ENCODE measurements at regions of chr4 and their contacts with region 1.

Region 1: GRCh38 chr4:56977321-56978012 is at the start of gene NOA1:
- DNase-seq: peak; percentile 99
- ATAC-seq: peak; percentile 68
- H3K4me3 ChIP-seq: peak within 1 kb of the TSS; percentile 98
- H3K27ac ChIP-seq: peak within 1 kb of the TSS; percentile 79
- H3K4me1 ChIP-seq: peaks cover 31% of the 10 kb centered on the region
- H3K27me3 ChIP-seq: no peaks in the 10 kb centered on the region
- CTCF ChIP-seq: no peak
- total RNA-seq, gene NOA1: 33.1 and 37.7 TPM in 2 replicates

Region 2: GRCh38 chr4:56445699-56446098 is 531.8 kb before region 1 on chr4:
- CTCF ChIA-PET with region 1: no interaction called
- POLR2A ChIA-PET with region 1: no interaction called
- intact Hi-C with region 1: no loop called
- DNase-seq: no peak
- ATAC-seq: no peak
- H3K4me3 ChIP-seq: no peak overlapping the region
- H3K27ac ChIP-seq: no peak overlapping the region
- H3K4me1 ChIP-seq: peaks cover 14% of the 10 kb centered on the region; the same call in 1 of the 2 replicates
- H3K27me3 ChIP-seq: no peaks in the 10 kb centered on the region
- CTCF ChIP-seq: no peak

Region 3: DNA sequence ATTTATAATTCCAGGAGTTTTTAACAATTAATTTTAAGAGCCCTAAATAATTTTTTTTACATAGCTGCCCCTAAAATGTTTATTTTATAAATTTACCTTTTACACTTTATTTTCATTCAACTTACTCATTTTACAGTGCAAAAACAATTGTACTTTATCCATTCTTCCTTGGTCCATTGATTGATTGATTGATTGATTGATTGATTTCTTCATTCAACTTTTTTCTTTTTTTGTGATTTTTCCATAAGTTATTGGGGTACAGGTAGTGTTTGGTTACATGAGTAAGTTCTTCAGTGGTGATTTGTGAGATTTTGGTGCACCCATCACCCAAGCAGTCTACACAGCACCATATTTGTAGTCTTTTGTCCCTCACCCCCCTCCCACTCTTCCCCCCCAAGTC is 390.4 kb before region 1 on chr4:
- CTCF ChIA-PET with region 1: no interaction called
- POLR2A ChIA-PET with region 1: interaction called, 21 read pairs
- intact Hi-C with region 1: no loop called
- DNase-seq: no peak
- ATAC-seq: no peak
- H3K4me3 ChIP-seq: no peak overlapping the region
- H3K27ac ChIP-seq: no peak overlapping the region
- H3K4me1 ChIP-seq: no peaks in the 10 kb centered on the region
- H3K27me3 ChIP-seq: no peaks in the 10 kb centered on the region
- CTCF ChIP-seq: no peak

Region 4: DNA sequence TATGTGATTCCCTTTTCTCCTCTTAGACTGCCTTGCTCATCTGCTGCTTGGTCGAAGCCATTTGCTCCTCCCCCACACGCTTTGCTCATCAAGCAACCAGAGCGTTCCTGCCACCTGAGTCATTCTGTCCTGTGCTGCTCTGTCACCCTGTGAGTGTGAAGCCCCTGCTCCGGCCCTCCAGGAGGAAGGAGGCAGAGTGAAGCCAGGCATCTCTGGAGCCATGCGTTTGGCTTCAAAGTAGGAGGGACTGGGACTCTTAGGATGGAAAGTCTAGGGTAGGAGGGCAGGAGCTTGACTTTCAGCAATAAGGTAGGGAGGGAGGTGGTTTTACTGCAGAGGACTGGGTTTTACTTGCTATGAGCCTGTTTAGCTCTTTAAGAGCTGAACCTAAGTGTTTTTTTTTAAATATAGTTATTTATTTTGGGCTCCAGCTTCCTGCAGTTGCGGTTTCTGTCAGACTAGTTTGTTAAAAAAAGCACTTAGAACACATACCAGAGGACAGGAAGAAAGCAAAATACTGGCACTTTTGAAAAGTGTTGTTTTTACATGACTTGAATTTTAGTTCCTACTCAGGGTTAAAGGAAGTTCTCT is 219.6 kb before region 1 on chr4:
- CTCF ChIA-PET with region 1: no interaction called
- POLR2A ChIA-PET with region 1: no interaction called
- intact Hi-C with region 1: no loop called
- DNase-seq: peak; percentile 98
- ATAC-seq: peak; percentile 89
- H3K4me3 ChIP-seq: peak overlapping the region; percentile 43
- H3K27ac ChIP-seq: peak overlapping the region; percentile 74
- H3K4me1 ChIP-seq: peaks cover 39% of the 10 kb centered on the region
- H3K27me3 ChIP-seq: no peaks in the 10 kb centered on the region
- CTCF ChIP-seq: no peak

Region 5: GRCh38 chr4:56768763-56769162 is 208.7 kb before region 1 on chr4:
- CTCF ChIA-PET with region 1: no interaction called
- POLR2A ChIA-PET with region 1: no interaction called
- intact Hi-C with region 1: no loop called
- DNase-seq: no peak
- ATAC-seq: no peak
- H3K4me3 ChIP-seq: no peak overlapping the region
- H3K27ac ChIP-seq: no peak overlapping the region
- H3K4me1 ChIP-seq: no peaks in the 10 kb centered on the region
- H3K27me3 ChIP-seq: no peaks in the 10 kb centered on the region
- CTCF ChIP-seq: no peak

Region 6: DNA sequence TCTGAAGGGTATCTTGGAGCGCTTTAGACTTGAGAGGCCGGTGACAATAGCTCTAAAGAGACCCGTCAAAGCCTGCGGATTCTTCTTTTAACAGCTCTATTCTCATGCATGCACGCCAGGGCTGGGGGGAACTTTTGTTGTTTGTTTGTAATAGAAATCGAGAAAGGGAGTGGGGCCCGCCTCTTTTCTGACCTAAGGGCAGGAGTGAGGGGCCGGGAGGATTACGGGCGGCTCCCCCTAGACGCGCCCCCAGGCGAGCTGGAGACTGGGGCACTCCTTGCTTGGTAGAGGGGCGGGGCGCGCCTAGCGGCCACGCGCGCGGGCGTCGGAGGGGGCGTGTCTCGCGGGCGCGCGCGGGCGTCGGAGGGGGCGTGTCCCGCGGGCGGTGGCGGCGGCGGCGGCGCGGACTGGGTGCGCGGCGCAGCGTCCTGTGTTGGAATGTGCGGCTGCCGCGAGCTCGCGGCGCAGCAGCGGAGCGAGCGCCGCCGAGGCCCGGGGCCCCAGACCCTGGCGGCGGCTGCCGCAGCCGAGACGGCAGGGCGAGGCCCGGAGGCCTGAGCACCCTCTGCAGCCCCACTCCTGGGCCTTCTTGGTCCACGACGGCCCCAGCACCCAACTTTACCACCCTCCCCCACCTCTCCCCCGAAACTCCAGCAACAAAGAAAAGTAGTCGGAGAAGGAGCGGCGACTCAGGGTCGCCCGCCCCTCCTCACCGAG is 69.8 kb before region 1 on chr4 and contains the start of gene REST:
- CTCF ChIA-PET with region 1: no interaction called
- POLR2A ChIA-PET with region 1: interaction called, 5 read pairs
- intact Hi-C with region 1: loop called (anchors 1 kb)
- DNase-seq: peak; percentile 79
- ATAC-seq: peak; percentile 68
- H3K4me3 ChIP-seq: peak within 1 kb of the TSS; percentile 89
- H3K27ac ChIP-seq: no peak within 1 kb of the TSS
- H3K4me1 ChIP-seq: peaks cover 20% of the 10 kb centered on the region
- H3K27me3 ChIP-seq: no peaks in the 10 kb centered on the region
- CTCF ChIP-seq: no peak
- total RNA-seq, gene REST: 21.7 and 22.4 TPM in 2 replicates

Region 7: GRCh38 chr4:56958111-56958517 is 19.4 kb before region 1 on chr4:
- CTCF ChIA-PET with region 1: no interaction called
- POLR2A ChIA-PET with region 1: interaction called, 3 read pairs
- intact Hi-C with region 1: loop called (anchors 2 kb)
- DNase-seq: peak; percentile 78
- ATAC-seq: peak; percentile 86
- H3K4me3 ChIP-seq: peak overlapping the region; percentile 5; the same call in 1 of the 2 replicates
- H3K27ac ChIP-seq: no peak overlapping the region
- H3K4me1 ChIP-seq: peaks cover 7% of the 10 kb centered on the region; the same call in 1 of the 2 replicates
- H3K27me3 ChIP-seq: no peaks in the 10 kb centered on the region
- CTCF ChIP-seq: no peak

Region 8: GRCh38 chr4:57020467-57021101 is 43.1 kb after region 1 on chr4:
- CTCF ChIA-PET with region 1: interaction called, 6 read pairs
- POLR2A ChIA-PET with region 1: no interaction called
- intact Hi-C with region 1: loop called (anchors 2 kb)
- DNase-seq: peak; percentile 95
- ATAC-seq: peak; percentile 81
- H3K4me3 ChIP-seq: no peak overlapping the region
- H3K27ac ChIP-seq: peak overlapping the region; percentile 86
- H3K4me1 ChIP-seq: peaks cover 61% of the 10 kb centered on the region
- H3K27me3 ChIP-seq: no peaks in the 10 kb centered on the region
- CTCF ChIP-seq: no peak